ENCODE measurements at regions of chr18 and their contacts with region 1.

Region 1: DNA sequence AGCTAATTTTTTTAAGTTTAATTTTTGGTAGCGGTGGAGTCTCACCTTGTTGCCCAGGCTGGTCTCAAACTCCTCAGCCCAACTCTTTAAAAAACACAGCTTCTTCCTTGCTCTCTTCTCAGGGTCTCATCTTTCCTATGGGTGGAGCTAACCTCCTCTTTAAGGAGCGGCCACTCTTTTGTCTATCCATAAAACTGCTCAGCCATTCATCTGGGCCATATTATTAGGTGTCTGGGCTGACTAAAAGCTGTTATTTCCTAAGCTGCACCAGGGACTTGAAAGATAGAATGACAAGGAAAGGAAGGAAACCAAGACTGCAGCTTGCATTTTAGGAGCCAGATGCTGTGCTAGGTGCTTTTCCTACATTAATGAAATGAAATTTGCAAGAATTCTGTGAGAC is 35.8 kb upstream of the THOC1 start:
- DNase-seq: no peak
- ATAC-seq: no peak
- H3K4me3 ChIP-seq: no peak overlapping the region
- H3K27ac ChIP-seq: no peak overlapping the region
- H3K4me1 ChIP-seq: no peaks in the 10 kb centered on the region
- H3K27me3 ChIP-seq: peaks cover 55% of the 10 kb centered on the region
- CTCF ChIP-seq: no peak
- POLR2A ChIP-seq: no peak
- RAD21 ChIP-seq: no peak

Region 2: GRCh38 chr18:158128-159036 is 145.2 kb before region 1 on chr18 and contains the start of gene USP14:
- CTCF ChIA-PET with region 1: no interaction called
- POLR2A ChIA-PET with region 1: no interaction called
- dilution Hi-C with region 1: no loop called
- in situ Hi-C with region 1: no loop called
- intact Hi-C with region 1: no loop called
- DNase-seq: peak; percentile 96
- ATAC-seq: peak; percentile 97
- H3K4me3 ChIP-seq: peak within 1 kb of the TSS; percentile 90
- H3K27ac ChIP-seq: peak within 1 kb of the TSS; percentile 67
- H3K4me1 ChIP-seq: no peaks in the 10 kb centered on the region
- H3K27me3 ChIP-seq: no peaks in the 10 kb centered on the region
- CTCF ChIP-seq: no peak
- POLR2A ChIP-seq: peak; percentile 85
- RAD21 ChIP-seq: no peak
- total RNA-seq, gene USP14: 11.5 and 25.8 TPM in 2 replicates

Region 3: DNA sequence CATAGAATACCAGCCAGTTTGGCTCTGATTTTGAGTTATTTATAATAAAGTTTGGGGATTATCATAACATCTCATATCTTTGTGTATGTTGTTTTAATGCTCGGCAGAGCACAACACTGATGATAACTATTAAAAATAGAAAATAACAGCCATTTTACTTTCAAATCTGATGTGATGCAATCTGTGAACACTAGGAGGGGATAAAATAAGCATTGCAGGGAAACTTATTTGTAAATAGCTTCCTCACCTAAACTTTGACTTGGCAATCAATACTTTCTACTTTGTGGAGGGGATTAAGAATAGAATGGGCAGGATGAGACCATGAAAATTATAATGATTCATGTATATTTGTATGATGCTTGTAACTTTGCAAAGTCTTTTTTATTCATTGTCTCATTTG is 90.8 kb before region 1 on chr18:
- CTCF ChIA-PET with region 1: no interaction called
- POLR2A ChIA-PET with region 1: no interaction called
- dilution Hi-C with region 1: no loop called
- in situ Hi-C with region 1: no loop called
- intact Hi-C with region 1: no loop called
- DNase-seq: no peak
- ATAC-seq: no peak
- H3K4me3 ChIP-seq: no peak overlapping the region
- H3K27ac ChIP-seq: no peak overlapping the region
- H3K4me1 ChIP-seq: no peaks in the 10 kb centered on the region
- H3K27me3 ChIP-seq: no peaks in the 10 kb centered on the region
- CTCF ChIP-seq: 0 out of 2 replicates have a peak, but pooled peaks have one; percentile 7
- POLR2A ChIP-seq: no peak
- RAD21 ChIP-seq: no peak

Region 4: GRCh38 chr18:250688-251422 is 52.8 kb before region 1 on chr18:
- CTCF ChIA-PET with region 1: no interaction called
- POLR2A ChIA-PET with region 1: no interaction called
- dilution Hi-C with region 1: no loop called
- in situ Hi-C with region 1: no loop called
- intact Hi-C with region 1: no loop called
- DNase-seq: peak; percentile 70
- ATAC-seq: peak; percentile 99
- H3K4me3 ChIP-seq: no peak overlapping the region
- H3K27ac ChIP-seq: no peak overlapping the region
- H3K4me1 ChIP-seq: no peaks in the 10 kb centered on the region
- H3K27me3 ChIP-seq: no peaks in the 10 kb centered on the region
- CTCF ChIP-seq: no peak
- POLR2A ChIP-seq: no peak
- RAD21 ChIP-seq: no peak

Region 5: DNA sequence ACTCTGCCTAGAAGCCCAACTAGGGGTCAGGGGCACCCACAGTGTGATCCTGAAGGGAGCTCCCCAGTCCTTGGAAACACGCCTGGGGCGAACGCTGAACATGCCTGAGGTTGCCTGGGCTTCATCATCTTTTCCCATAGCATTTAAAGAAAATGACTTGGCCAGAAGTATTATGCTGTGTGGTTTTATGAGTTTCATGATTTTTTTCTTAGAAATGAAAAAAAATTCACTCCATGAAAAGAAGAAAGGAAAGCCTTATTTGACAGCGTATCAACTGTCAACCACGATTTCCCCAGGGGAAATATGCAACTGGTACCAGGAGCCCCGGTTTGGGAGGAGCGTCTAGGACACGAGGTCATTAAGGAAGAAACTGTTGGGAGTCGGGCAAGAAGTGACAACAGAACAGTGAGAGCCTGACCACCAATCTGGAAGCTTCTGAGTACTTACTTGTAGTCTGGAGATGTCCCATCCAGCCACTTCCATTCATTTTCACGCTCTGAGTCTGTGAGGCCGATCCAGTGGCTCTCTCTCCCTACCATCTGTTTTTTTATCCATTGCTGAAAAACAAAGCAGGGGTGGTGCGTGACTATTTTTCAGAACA is 27.7 kb after region 1 on chr18:
- CTCF ChIA-PET with region 1: no interaction called
- POLR2A ChIA-PET with region 1: interaction called, 15 read pairs
- dilution Hi-C with region 1: no loop called
- in situ Hi-C with region 1: no loop called
- intact Hi-C with region 1: no loop called
- DNase-seq: no peak
- ATAC-seq: no peak
- H3K4me3 ChIP-seq: no peak overlapping the region
- H3K27ac ChIP-seq: no peak overlapping the region
- H3K4me1 ChIP-seq: peaks cover 7% of the 10 kb centered on the region; the same call in 1 of the 2 replicates
- H3K27me3 ChIP-seq: peaks cover 42% of the 10 kb centered on the region
- CTCF ChIP-seq: no peak
- POLR2A ChIP-seq: no peak
- RAD21 ChIP-seq: no peak